Aorta (tissue), 5 donors: ENCODE measurements at regions of chr11 and their contacts with region 1.

Region 1: GRCh38 chr11:43282607-43283440 is 29.0 kb upstream of the API5 start:
- DNase-seq: peak in 1 of 2 donors; percentile 76
- ATAC-seq: peak; percentile 41
- H3K4me3 ChIP-seq: no peak overlapping the region
- H3K27ac ChIP-seq: no peak overlapping the region
- H3K4me1 ChIP-seq: no peaks in the 10 kb centered on the region
- H3K27me3 ChIP-seq: no peaks in the 10 kb centered on the region

Region 2: DNA sequence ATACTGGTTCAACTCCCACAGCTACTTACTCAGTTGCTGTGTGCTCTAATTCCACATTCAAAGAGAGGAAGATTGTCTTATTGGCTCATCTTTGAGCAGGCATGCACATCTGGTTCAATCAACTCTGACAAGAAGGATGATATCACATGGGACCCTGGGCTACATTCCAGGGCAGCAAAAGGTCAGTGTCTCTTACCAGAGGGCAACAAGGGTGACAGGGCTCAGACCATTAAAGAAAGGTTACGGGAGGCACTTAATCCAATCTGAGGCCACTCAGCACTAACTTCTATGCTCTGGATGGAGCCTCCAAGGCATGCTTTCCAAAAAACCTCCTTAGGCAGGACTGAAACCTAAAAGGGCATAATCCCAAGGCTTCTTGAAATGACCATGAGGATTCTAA is 520.5 kb before region 1 on chr11:
- intact Hi-C with region 1: loop called in 1 of 2 experiments (anchors 10 kb)
- DNase-seq: no peak
- ATAC-seq: no peak
- H3K4me3 ChIP-seq: no peak overlapping the region
- H3K27ac ChIP-seq: no peak overlapping the region
- H3K4me1 ChIP-seq: no peaks in the 10 kb centered on the region
- H3K27me3 ChIP-seq: no peaks in the 10 kb centered on the region

Region 3: GRCh38 chr11:42770444-42771065 is 512.3 kb before region 1 on chr11:
- intact Hi-C with region 1: loop called (anchors 5 to 10 kb)
- DNase-seq: no peak
- ATAC-seq: no peak
- H3K4me3 ChIP-seq: no peak overlapping the region
- H3K27ac ChIP-seq: no peak overlapping the region
- H3K4me1 ChIP-seq: no peaks in the 10 kb centered on the region
- H3K27me3 ChIP-seq: no peaks in the 10 kb centered on the region

Region 4: DNA sequence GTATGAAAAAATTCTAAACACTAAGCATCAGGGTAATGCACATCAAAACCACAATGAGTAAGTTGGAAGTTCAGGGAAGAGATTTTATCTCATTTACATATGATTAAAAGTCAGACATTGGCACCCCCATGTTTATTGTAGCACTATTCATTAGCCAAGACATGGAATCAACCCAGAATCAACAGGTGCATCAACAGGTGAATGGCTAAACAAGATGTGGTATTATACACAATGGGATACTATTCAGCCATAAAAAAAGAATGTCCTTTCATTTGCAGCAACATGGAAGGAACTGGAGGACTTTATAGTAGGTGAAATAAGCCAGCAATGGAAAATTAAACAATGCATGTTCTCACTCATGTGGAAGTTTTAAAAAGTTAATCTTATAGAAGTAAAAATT is 58.3 kb after region 1 on chr11:
- intact Hi-C with region 1: no loop called
- DNase-seq: no peak
- ATAC-seq: no peak
- H3K4me3 ChIP-seq: no peak overlapping the region
- H3K27ac ChIP-seq: no peak overlapping the region
- H3K4me1 ChIP-seq: no peaks in the 10 kb centered on the region
- H3K27me3 ChIP-seq: no peaks in the 10 kb centered on the region